Heart left ventricle (tissue), 16 donors: ENCODE measurements at regions of chr11 and their contacts with region 1.

Region 1: GRCh38 chr11:10653926-10654810 is 39.4 kb downstream of the IRAG1 start:
- DNase-seq: no peak
- ATAC-seq: peak; percentile 68 to 74 (median 73)
- H3K4me3 ChIP-seq: no peak overlapping the region
- H3K27ac ChIP-seq: peak overlapping the region in 6 of 12 donors; percentile 10 to 77 (median 59)
- H3K4me1 ChIP-seq: peaks cover 3 to 66% (median 22%) of the 10 kb centered on the region in 12 donors
- H3K27me3 ChIP-seq: no peaks in the 10 kb centered on the region
- CTCF ChIP-seq: peak; percentile 49 to 81 (median 68)
- POLR2A ChIP-seq: no peak

Region 2: GRCh38 chr11:10405855-10406592 is 248.1 kb before region 1 on chr11:
- intact Hi-C with region 1: loop called (anchors 2 to 10 kb)
- DNase-seq: peak in 4 of 5 donors; percentile 75 to 78 (median 76)
- ATAC-seq: peak; percentile 80 to 95 (median 92)
- H3K4me3 ChIP-seq: no peak overlapping the region
- H3K27ac ChIP-seq: no peak overlapping the region
- H3K4me1 ChIP-seq: peaks cover 0 to 34% (median 4%) of the 10 kb centered on the region in 12 donors
- H3K27me3 ChIP-seq: no peaks in the 10 kb centered on the region
- CTCF ChIP-seq: peak; percentile 57 to 85 (median 76)
- POLR2A ChIP-seq: no peak

Region 3: DNA sequence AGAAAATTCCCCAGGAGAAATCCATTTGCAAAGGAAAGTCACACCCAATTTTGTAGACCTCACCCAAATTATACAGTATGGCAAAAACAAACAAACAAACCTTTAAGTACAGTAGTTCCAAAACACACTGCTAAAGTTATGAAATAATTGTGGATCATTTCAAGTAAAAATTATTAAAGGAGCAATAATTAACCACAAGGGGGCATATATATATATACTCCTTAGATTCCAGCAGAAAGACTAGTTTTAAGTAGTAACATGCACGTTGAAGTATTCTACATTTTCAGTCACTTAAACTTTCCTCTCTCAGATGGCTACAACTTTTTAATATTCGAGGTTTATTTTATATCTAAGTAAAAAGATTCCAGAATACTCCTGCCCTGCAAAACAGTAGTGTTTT is 140.0 kb before region 1 on chr11:
- intact Hi-C with region 1: loop called in 8 of 10 experiments (anchors 1 to 10 kb)
- DNase-seq: no peak
- ATAC-seq: no peak
- H3K4me3 ChIP-seq: no peak overlapping the region
- H3K27ac ChIP-seq: no peak overlapping the region
- H3K4me1 ChIP-seq: peaks cover 0 to 10% (median under 1%) of the 10 kb centered on the region in 12 donors
- H3K27me3 ChIP-seq: no peaks in the 10 kb centered on the region
- CTCF ChIP-seq: peak in 11 of 12 donors; percentile 16 to 57 (median 42)
- POLR2A ChIP-seq: no peak

Region 4: GRCh38 chr11:10564696-10565318 is 89.4 kb before region 1 on chr11:
- intact Hi-C with region 1: loop called in 5 of 10 experiments (anchors 5 to 10 kb)
- DNase-seq: no peak
- ATAC-seq: no peak
- H3K4me3 ChIP-seq: peak overlapping the region in 4 of 12 donors; percentile 10 to 38 (median 14)
- H3K27ac ChIP-seq: no peak overlapping the region
- H3K4me1 ChIP-seq: peaks cover 0 to 23% (median 0%) of the 10 kb centered on the region in 12 donors
- H3K27me3 ChIP-seq: no peaks in the 10 kb centered on the region
- CTCF ChIP-seq: peak in 10 of 12 donors; percentile 24 to 47 (median 38)
- POLR2A ChIP-seq: no peak

Region 5: GRCh38 chr11:10735481-10736475 is 81.6 kb after region 1 on chr11:
- intact Hi-C with region 1: loop called in 3 of 10 experiments (anchors 5 to 10 kb)
- DNase-seq: peak; percentile 93 to 98 (median 96)
- ATAC-seq: peak; percentile 99 to 100 (median 100)
- H3K4me3 ChIP-seq: peak overlapping the region in 10 of 12 donors; percentile 6 to 45 (median 28)
- H3K27ac ChIP-seq: peak overlapping the region in 10 of 12 donors; percentile 17 to 75 (median 66)
- H3K4me1 ChIP-seq: peaks cover 0 to 13% (median 5%) of the 10 kb centered on the region in 12 donors
- H3K27me3 ChIP-seq: no peaks in the 10 kb centered on the region
- CTCF ChIP-seq: peak; percentile 97 to 100 (median 99)
- POLR2A ChIP-seq: no peak